ENCODE measurements at regions of chr11 and their contacts with region 1.

Region 1: GRCh38 chr11:46826310-46827044 is 19.6 kb downstream of the CKAP5 start:
- DNase-seq: peak; percentile 89 to 91
- ATAC-seq: peak; percentile 96 to 99 (median 98)
- H3K4me3 ChIP-seq: peak overlapping the region; percentile 80
- H3K27ac ChIP-seq: peak overlapping the region; percentile 80
- H3K4me1 ChIP-seq: peaks cover 32% of the 10 kb centered on the region
- H3K27me3 ChIP-seq: no peaks in the 10 kb centered on the region
- CTCF ChIP-seq: no peak

Region 2: GRCh38 chr11:46675288-46675851 is 151.1 kb before region 1 on chr11:
- intact Hi-C with region 1: no loop called
- DNase-seq: peak; percentile 69 to 86
- ATAC-seq: peak; percentile 72 to 83 (median 76)
- H3K4me3 ChIP-seq: no peak overlapping the region
- H3K27ac ChIP-seq: peak overlapping the region; percentile 81
- H3K4me1 ChIP-seq: peaks cover 17% of the 10 kb centered on the region
- H3K27me3 ChIP-seq: no peaks in the 10 kb centered on the region
- CTCF ChIP-seq: no peak

Region 3: DNA sequence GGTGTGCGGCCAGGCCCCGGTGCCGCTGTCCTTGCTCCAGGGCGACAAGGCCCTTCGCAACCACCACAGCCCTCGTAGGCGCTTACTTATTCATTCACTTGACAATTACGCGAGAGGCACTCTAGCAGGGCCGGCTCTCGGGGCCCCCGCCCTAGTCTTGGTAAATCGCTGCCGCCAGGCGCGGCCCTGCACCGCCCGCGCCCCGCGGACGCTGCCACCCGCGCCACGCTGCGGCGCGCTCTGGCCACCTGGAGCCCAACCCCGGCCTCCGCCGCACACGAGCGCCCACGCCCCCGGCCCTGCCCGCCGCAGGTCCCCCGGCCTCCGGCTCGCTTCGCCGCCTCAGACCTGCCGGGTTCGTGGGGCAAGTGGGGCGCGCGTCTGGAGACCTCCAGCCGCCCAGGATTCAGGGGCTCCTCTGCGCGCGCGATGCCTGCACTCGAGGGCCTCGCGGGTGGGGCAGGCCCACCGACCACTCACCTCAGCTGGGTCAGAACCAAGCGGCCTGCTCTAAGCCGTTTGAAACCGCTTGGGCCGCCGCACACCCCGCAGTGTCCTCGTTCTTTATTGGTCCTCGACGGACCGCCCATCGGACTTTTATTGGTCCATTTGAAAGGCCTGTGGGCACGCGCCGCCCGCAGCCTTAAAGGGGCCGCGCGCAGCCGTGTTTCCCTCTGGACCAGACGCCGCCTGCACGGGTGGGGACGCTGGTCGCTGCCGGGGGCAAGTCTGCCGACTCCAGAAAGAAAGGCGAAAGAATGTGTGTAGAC is 19.4 kb after region 1 on chr11 and contains the start of gene CKAP5:
- intact Hi-C with region 1: loop called in 1 of 2 experiments (anchors 2 kb)
- DNase-seq: peak; percentile 89 to 94
- ATAC-seq: peak; percentile 96 to 99 (median 98)
- H3K4me3 ChIP-seq: peak within 1 kb of the TSS; percentile 86
- H3K27ac ChIP-seq: peak within 1 kb of the TSS; percentile 85
- H3K4me1 ChIP-seq: peaks cover 22% of the 10 kb centered on the region
- H3K27me3 ChIP-seq: no peaks in the 10 kb centered on the region
- CTCF ChIP-seq: no peak
- total RNA-seq, gene CKAP5: 86.4 to 160 (median 119) TPM

Region 4: GRCh38 chr11:47123094-47123493 is 296.6 kb after region 1 on chr11:
- intact Hi-C with region 1: no loop called
- DNase-seq: no peak
- ATAC-seq: no peak
- H3K4me3 ChIP-seq: no peak overlapping the region
- H3K27ac ChIP-seq: no peak overlapping the region
- H3K4me1 ChIP-seq: no peaks in the 10 kb centered on the region
- H3K27me3 ChIP-seq: no peaks in the 10 kb centered on the region
- CTCF ChIP-seq: no peak